IMR-90 (cell line): ENCODE measurements at regions of chr14 and their contacts with region 1.

Region 1: GRCh38 chr14:73851644-73852382 is at the start of gene PTGR2:
- DNase-seq: peak; percentile 96
- ATAC-seq: peak; percentile 96
- H3K4me3 ChIP-seq: peak within 1 kb of the TSS; percentile 62
- H3K27ac ChIP-seq: peak within 1 kb of the TSS; percentile 88
- H3K4me1 ChIP-seq: no peaks in the 10 kb centered on the region; the same call in 1 of the 2 replicates
- H3K27me3 ChIP-seq: no peaks in the 10 kb centered on the region
- CTCF ChIP-seq: peak; percentile 12; the same call in 1 of the 2 replicates
- POLR2A ChIP-seq: peak; percentile 89
- RAD21 ChIP-seq: no peak
- total RNA-seq, gene PTGR2: 1.3 and 2.8 TPM in 2 replicates

Region 2: DNA sequence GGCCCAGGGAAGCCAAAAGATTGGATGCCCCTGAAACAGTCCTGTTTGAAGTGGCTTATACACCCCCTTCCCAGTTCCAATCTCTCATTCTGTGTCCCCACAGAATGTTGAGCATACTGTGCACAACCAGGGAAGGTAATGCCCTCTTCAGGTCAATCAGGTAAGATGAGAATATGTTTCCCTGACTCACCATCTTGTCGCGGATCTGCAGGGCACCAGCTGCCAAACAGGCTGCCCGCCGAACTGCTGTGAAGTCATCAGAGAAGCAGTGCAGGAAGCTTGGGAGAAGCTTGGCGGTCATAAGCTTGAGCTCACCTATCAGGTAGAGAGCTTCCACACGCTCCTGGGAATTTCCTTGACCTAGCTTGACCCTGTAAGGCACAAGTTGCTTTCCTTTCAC is 351.5 kb before region 1 on chr14:
- CTCF ChIA-PET with region 1: no interaction called
- POLR2A ChIA-PET with region 1: no interaction called
- dilution Hi-C with region 1: no loop called
- in situ Hi-C with region 1: no loop called
- intact Hi-C with region 1: no loop called
- DNase-seq: no peak
- ATAC-seq: no peak
- H3K4me3 ChIP-seq: no peak overlapping the region
- H3K27ac ChIP-seq: no peak overlapping the region
- H3K4me1 ChIP-seq: no peaks in the 10 kb centered on the region
- H3K27me3 ChIP-seq: no peaks in the 10 kb centered on the region
- CTCF ChIP-seq: no peak
- POLR2A ChIP-seq: no peak
- RAD21 ChIP-seq: no peak

Region 3: DNA sequence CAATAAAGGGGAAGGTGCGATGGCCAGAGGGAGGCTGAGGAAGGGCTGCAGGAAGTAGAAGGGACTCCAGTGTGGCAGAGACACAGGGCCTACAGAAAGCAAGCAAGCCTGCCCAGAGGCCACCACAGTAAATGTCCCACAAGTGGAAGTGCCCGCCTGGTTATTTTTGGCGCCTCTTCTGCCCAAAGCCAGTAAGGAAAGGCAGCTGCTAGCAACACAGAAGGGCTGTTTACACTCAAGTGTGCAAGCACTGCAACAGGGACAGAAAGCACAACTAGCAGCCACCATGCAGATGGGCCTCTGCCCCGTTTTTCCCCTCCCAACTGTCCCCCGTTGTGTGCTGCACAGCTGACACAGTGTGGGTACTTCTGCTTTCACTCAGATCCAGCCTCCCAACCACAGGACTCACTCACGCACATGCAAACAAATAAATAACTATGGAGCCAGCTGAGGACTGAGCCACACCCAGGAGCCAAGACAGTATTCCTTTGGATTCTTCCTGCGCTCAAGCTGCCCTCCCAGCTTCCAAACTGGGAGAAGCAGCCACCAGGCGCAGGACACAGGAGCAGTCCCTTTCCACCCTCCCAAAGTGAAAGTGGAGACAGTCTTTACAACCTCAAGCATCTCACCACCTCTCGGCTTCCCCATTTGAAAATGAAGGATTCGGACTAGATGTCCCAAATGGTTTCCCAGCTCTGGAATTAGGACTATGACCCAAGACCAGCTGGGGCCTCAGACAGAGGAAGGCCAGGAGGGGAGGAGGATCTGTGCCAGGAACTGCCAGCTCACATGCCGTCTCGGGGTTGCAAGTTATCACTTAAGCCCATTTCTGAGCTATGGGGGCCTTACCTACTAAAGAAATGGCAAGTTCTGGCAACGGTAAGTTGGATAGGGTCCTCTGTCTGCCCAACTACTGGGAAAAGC is 97.6 kb before region 1 on chr14:
- CTCF ChIA-PET with region 1: no interaction called
- POLR2A ChIA-PET with region 1: no interaction called
- dilution Hi-C with region 1: no loop called
- in situ Hi-C with region 1: no loop called
- intact Hi-C with region 1: loop called (anchors 5 kb)
- DNase-seq: no peak
- ATAC-seq: no peak
- H3K4me3 ChIP-seq: no peak overlapping the region
- H3K27ac ChIP-seq: peak overlapping the region; percentile 53
- H3K4me1 ChIP-seq: peaks cover 70% of the 10 kb centered on the region
- H3K27me3 ChIP-seq: no peaks in the 10 kb centered on the region
- CTCF ChIP-seq: no peak
- POLR2A ChIP-seq: no peak
- RAD21 ChIP-seq: no peak